Activated T-helper 1 cell treated with anti-CD3 and anti-CD28 coated beads, Interleukin-12 subunit alpha, Interleukin-12 subunit beta, Interleukin-2, Interleukin-4 antibody, amounts not matched to agents 30 ng/mL and 10 ng/mL and 1 ng/mL, durations not matched to agents 14 hours and 24 hours and 36 hours (primary cell): ENCODE measurements at regions of chr14 and their contacts with region 1.

Region 1: GRCh38 chr14:99230208-99231151 is 41.5 kb downstream of the BCL11B start:
- DNase-seq: peak; percentile 82
- H3K4me3 Mint-ChIP-seq: peak overlapping the region; percentile 78
- H3K27ac Mint-ChIP-seq: peak overlapping the region; percentile 98
- H3K4me1 Mint-ChIP-seq: peaks cover 89% of the 10 kb centered on the region
- H3K27me3 Mint-ChIP-seq: no peaks in the 10 kb centered on the region

Region 2: GRCh38 chr14:99213101-99213500 is 17.4 kb before region 1 on chr14:
- intact Hi-C with region 1: loop called (anchors 1 kb)
- DNase-seq: no peak
- H3K4me3 Mint-ChIP-seq: peak overlapping the region; percentile 66
- H3K27ac Mint-ChIP-seq: peak overlapping the region; percentile 92
- H3K4me1 Mint-ChIP-seq: peaks cover 96% of the 10 kb centered on the region
- H3K27me3 Mint-ChIP-seq: no peaks in the 10 kb centered on the region

Region 3: DNA sequence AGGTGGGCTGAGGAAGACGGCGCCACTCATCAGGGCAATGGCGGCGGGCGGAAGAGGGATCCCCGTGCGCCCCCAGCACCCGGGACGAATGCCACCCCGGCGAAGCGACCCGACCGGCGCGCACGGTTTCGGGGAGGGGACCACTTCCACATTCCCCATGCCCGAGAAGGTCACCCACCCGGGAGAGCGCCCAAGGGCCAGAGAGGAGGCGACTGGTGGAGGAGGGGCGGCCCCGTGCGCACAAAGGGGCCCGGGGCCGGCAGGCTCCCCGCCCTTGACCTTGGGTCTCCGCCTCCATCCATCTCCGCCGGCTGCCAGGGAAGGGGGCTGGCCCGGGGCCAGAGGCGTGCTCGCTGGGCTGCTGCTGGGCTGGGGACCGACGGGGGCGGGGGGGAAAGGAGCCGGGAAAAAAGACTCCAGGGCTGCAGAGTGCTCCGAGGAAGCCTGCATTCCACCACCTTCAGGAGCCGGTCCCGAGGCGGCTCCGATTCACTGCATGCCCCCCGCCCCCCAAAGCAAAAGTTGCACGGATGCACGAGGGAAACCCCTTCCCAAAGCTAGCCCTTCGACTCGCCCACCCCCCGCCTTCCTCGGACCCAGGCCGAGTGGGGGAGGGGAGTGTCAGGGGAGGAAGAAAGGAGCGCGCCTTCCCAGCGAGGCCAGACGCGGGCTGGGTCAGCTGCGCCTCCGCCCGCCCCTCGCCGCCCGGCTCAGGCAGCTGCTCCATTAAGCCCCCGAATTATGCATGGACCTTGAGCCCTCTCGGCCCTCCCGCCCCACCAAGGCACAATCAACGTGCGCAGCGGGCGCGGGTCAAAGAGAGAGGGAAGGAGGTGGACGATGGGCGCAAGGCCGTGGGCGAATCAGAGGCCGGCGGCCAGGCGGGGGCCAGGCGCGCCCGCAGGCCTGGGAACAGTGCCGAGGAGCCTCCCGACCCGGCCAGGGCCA is 15.4 kb after region 1 on chr14:
- intact Hi-C with region 1: loop called (anchors 1 kb)
- DNase-seq: no peak
- H3K4me3 Mint-ChIP-seq: peak overlapping the region; percentile 82
- H3K27ac Mint-ChIP-seq: peak overlapping the region; percentile 99
- H3K4me1 Mint-ChIP-seq: peaks cover 87% of the 10 kb centered on the region
- H3K27me3 Mint-ChIP-seq: no peaks in the 10 kb centered on the region

Region 4: DNA sequence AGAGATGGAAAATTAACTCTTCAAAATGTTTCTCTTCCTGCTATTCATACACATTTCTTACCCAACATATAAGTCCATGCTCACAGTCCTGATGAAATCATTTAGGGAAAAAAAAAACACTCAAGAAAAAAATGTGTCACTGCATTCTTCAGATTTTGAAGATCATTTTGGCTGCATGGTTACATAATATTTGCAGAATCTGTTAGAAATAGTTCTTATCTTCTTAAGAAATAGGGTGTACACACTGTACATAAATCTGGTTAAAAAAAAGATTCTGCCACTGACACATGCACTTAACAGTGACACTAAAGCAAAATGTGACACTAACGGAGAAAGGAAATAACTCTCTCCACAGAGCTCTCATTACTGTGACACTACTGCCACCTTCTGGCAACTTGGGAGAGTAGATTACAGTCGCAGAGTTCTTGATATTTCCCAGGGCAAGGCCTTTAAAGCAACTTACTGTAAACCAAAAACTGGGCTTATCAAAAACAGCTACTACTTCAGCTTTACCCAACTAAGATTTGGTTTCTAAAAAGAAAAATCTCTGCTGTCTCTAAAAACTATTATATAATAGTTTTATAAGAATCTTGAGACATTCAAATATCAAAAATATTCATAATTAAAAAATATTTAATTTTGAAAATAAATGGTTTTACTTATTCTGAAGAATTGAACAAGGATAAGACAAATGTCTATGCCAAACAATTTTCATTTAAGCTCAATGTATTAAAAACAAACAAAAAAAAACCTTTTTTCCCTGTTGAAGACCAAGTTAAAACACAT is 185.2 kb after region 1 on chr14:
- intact Hi-C with region 1: loop called (anchors 10 kb)
- DNase-seq: peak; percentile 55
- H3K4me3 Mint-ChIP-seq: no peak overlapping the region
- H3K27ac Mint-ChIP-seq: no peak overlapping the region
- H3K4me1 Mint-ChIP-seq: peaks cover 26% of the 10 kb centered on the region
- H3K27me3 Mint-ChIP-seq: no peaks in the 10 kb centered on the region